ENCODE measurements at regions of chr14 and their contacts with region 1.

Region 1: GRCh38 chr14:69780952-69781351 is 14.0 kb downstream of the SRSF5 start:
- DNase-seq: no peak
- H3K4me3 ChIP-seq: no peak overlapping the region
- H3K27ac ChIP-seq: no peak overlapping the region
- H3K4me1 ChIP-seq: no peaks in the 10 kb centered on the region
- H3K27me3 ChIP-seq: no peaks in the 10 kb centered on the region
- CTCF ChIP-seq: no peak
- POLR2A ChIP-seq: no peak

Region 2: GRCh38 chr14:69317104-69317755 is 463.7 kb before region 1 on chr14:
- intact Hi-C with region 1: no loop called
- DNase-seq: peak in 1 of 2 donors; percentile 39
- H3K4me3 ChIP-seq: no peak overlapping the region
- H3K27ac ChIP-seq: peak overlapping the region; percentile 67 to 77
- H3K4me1 ChIP-seq: no peaks in the 10 kb centered on the region
- H3K27me3 ChIP-seq: no peaks in the 10 kb centered on the region
- CTCF ChIP-seq: no peak
- POLR2A ChIP-seq: no peak

Region 3: DNA sequence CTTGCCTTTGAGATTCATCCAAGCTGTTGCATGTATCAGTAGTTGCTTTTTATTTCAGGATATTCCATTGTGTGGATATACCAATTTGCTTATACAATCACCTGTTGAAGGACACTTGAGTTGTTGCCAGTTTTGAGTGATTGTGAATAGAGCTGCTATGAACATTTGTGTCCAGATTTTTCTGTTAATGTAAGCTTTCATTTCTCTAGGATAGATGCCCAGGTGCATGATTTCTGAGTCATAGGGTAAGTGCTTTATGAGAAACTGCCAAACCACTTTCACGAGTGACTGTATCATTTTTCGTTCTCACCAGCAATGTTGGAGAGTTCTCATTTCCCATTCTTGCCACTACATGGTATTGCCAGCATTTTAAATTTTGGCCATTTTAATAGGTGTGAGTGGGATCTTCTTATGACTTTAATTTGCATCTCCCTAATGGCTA is 1716.7 kb after region 1 on chr14:
- intact Hi-C with region 1: loop called (anchors 10 kb)
- DNase-seq: no peak
- H3K4me3 ChIP-seq: no peak overlapping the region
- H3K27ac ChIP-seq: no peak overlapping the region
- H3K4me1 ChIP-seq: no peaks in the 10 kb centered on the region
- H3K27me3 ChIP-seq: no peaks in the 10 kb centered on the region
- CTCF ChIP-seq: no peak
- POLR2A ChIP-seq: no peak

Measured in breast epithelium (tissue), 4 donors.